Activated CD8-positive, alpha-beta T cell treated with anti-CD3 and anti-CD28 coated beads, Interleukin-2, amount 10 ng/mL, durations not matched to agents 7 days and 5 days (primary cell): ENCODE measurements at regions of chr3 and their contacts with region 1.

Region 1: DNA sequence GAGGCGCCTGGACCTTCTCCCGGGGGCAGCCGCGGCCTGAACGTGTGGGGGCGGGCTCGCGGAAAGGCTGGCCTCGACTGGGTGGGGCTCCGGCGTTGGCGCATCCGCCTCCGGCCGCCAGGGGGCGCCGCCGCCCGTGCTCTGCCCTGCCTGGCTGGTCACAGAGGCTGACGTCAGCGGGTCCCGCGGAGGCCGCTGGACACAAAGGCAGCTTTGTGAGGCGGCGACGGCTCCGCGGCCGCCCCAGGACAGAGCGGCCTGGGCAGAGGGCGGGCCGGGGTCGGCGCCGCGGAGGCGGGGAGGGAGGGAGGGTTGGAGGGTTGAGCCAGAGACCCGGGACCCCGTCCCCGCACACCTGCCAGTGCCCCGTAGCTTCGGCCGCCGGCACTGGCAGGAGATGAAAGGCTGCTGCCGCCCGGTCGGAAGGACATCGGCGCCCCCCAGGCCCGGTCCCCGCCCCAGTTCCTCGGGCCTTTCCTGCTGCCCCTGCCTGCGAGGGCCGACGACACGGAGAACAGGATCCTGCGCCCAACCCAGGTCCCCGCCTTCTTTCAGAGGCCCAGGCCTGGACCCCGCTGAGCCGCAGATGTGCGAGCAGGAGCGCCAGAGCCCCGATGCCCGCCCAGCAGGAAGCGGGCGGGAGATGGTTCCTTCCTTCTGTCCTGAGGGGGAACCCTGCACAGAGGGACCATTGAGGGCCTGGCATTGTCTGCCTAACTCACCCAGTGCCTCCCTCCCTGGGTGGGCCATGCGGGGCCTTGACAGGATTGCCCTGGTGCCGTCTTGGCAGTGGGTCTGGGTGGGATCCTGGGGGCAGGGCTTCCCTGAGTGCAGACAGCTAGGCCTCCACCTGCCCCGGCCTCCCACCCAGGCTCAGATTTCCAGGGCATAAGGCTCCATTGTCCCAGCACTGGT is 8.7 kb upstream of the SEMA3B start:
- DNase-seq: peak; percentile 87
- ATAC-seq: peak; percentile 97
- H3K4me3 Mint-ChIP-seq: peak overlapping the region; percentile 69
- H3K27ac Mint-ChIP-seq: peak overlapping the region; percentile 63
- H3K4me1 Mint-ChIP-seq: peaks cover 10% of the 10 kb centered on the region
- H3K27me3 Mint-ChIP-seq: no peaks in the 10 kb centered on the region

Region 2: GRCh38 chr3:50227390-50228183 is 32.7 kb before region 1 on chr3:
- CTCF ChIA-PET with region 1: interaction called, 22 read pairs
- POLR2A ChIA-PET with region 1: interaction called, 5 read pairs
- DNase-seq: peak; percentile 94
- ATAC-seq: peak; percentile 89
- H3K4me3 Mint-ChIP-seq: peak overlapping the region; percentile 91
- H3K27ac Mint-ChIP-seq: peak overlapping the region; percentile 90
- H3K4me1 Mint-ChIP-seq: peaks cover 34% of the 10 kb centered on the region
- H3K27me3 Mint-ChIP-seq: peaks cover 16% of the 10 kb centered on the region

Region 3: DNA sequence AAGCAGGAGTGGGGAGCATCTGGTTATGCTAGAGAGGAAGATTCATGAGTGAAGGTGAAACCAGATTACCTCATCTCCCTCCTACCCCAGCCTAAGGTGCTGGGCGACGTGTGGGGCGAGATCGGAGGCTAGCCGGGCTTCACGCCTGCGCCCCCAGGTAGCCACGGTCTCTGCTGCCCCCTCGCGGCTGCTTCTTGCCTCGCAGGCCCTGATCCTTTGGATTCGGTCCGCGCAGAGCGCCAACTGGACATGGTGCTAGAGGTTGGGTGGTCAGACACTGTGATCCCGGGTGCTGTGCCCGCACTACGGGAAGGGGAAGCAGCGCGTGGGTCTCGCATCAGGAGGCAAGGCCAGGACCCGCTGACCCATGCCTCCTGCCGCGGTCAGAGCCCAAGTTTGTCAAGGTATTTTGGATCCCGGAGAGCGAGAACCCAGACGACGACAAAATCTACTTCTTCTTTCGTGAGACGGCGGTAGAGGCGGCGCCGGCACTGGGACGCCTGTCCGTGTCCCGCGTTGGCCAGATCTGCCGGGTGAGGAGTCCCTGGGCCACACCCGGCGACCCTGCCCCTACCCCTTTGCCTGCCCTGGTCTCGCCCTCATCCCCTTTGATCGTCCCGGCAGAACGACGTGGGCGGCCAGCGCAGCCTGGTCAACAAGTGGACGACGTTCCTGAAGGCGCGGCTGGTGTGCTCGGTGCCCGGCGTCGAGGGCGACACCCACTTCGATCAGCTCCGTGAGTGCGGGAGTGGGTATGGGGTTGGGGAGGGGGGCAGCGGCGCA is 12.8 kb after region 1 on chr3:
- CTCF ChIA-PET with region 1: interaction called, 13 read pairs
- POLR2A ChIA-PET with region 1: interaction called, 3 read pairs
- DNase-seq: peak; percentile 93
- ATAC-seq: peak; percentile 90
- H3K4me3 Mint-ChIP-seq: peak overlapping the region; percentile 72
- H3K27ac Mint-ChIP-seq: peak overlapping the region; percentile 52
- H3K4me1 Mint-ChIP-seq: peaks cover 34% of the 10 kb centered on the region
- H3K27me3 Mint-ChIP-seq: peaks cover 40% of the 10 kb centered on the region

Region 4: DNA sequence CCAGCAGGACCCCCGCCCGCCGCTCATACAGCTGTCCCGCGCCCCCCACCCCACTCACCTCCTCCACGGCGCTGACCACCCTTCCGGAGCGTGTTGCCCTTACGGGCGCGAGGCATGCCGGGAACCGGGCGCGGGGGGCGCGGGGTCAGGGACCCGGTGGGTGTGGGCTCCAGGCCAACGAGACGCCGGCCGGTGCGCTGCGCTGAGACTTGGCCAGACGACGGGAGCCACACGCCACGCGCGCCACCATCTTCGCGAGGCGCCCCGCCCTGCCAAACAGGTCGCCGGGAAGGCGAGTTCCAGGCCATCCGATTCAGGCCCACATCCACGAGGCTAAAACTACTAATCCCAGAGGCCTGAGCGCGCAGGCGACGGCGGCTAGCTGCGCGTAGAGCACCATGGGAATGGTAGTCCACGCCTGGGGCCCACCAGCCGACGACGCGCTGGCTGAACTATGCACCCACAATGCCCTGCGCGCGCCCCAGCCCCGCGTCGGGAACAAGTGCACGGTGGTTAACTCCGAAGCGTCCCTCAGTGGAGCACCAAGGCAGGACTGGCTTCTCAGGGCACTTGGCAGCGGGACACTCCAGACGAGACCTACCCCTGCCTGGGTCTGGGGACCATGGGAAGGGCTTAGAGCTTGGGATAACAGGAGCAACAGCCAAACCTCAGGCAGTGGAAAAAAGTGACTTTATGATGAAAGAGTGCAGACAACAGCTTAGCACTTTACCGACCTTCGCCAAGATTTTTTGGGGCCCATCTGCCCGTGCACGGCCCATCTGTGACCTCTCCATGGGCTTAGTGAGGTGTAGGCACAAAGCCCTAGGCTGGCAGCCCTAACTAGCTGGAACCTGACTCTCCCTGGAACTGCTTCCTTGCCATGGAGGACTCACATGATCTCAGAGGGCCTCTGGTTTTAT is 32.1 kb after region 1 on chr3 and contains the start of gene IFRD2:
- CTCF ChIA-PET with region 1: interaction called, 10 read pairs
- POLR2A ChIA-PET with region 1: no interaction called
- DNase-seq: peak; percentile 98
- ATAC-seq: peak; percentile 99
- H3K4me3 Mint-ChIP-seq: peak within 1 kb of the TSS; percentile 88
- H3K27ac Mint-ChIP-seq: peak within 1 kb of the TSS; percentile 94
- H3K4me1 Mint-ChIP-seq: peaks cover 29% of the 10 kb centered on the region
- H3K27me3 Mint-ChIP-seq: no peaks in the 10 kb centered on the region
- total RNA-seq, gene IFRD2: 81.3 to 85.1 TPM

Region 5: DNA sequence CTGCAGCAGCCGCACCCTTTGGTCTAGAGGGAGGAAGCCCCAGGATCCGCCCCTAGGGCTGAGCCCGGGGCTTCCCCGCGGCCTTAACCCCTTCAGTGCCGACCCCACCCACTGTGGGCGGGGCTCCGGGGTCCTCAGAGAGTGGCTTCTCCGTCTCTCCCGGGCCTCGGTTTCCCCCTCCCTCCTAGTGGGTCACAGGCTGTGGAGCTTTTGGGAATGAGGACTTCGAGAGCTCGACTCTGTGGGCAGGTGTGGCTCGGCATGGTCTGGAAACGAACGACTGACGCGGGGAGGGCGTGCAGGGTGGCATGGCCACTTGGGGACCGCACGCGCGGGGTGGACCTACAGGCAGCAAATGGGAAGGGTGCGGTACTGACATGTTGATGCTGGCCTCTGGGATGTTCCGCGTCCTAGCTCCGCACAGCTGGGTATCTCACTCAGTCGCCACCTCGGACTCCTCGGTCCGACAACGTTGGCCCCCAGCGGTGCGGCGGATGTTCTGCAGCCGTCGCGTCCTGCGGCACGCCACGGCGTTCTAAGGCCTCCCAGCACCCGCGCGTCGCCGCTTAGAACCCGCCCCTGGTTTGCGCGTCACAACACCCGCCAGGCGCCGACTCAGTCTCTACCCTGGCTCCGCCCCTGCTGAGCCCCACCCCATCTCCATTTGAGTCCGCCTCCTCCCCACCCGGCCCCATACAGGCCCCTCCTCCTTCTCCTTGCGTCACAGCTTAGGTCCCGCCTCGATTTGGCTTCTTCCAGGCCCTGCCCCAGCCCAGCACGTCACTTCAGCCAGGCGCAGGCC is 38.8 kb after region 1 on chr3 and contains the starts of genes HYAL3 and NAA80:
- CTCF ChIA-PET with region 1: interaction called, 11 read pairs
- POLR2A ChIA-PET with region 1: no interaction called
- DNase-seq: peak; percentile 100
- ATAC-seq: peak; percentile 87
- H3K4me3 Mint-ChIP-seq: peak within 1 kb of the TSS; percentile 97
- H3K27ac Mint-ChIP-seq: peak within 1 kb of the TSS; percentile 99
- H3K4me1 Mint-ChIP-seq: peaks cover 32% of the 10 kb centered on the region
- H3K27me3 Mint-ChIP-seq: no peaks in the 10 kb centered on the region
- total RNA-seq, gene HYAL3: 9.7 to 12.7 TPM
- total RNA-seq, gene NAA80: 26.8 to 28.5 TPM